T-cell (primary cell): ENCODE measurements at regions of chr6 and their contacts with region 1.

Region 1: DNA sequence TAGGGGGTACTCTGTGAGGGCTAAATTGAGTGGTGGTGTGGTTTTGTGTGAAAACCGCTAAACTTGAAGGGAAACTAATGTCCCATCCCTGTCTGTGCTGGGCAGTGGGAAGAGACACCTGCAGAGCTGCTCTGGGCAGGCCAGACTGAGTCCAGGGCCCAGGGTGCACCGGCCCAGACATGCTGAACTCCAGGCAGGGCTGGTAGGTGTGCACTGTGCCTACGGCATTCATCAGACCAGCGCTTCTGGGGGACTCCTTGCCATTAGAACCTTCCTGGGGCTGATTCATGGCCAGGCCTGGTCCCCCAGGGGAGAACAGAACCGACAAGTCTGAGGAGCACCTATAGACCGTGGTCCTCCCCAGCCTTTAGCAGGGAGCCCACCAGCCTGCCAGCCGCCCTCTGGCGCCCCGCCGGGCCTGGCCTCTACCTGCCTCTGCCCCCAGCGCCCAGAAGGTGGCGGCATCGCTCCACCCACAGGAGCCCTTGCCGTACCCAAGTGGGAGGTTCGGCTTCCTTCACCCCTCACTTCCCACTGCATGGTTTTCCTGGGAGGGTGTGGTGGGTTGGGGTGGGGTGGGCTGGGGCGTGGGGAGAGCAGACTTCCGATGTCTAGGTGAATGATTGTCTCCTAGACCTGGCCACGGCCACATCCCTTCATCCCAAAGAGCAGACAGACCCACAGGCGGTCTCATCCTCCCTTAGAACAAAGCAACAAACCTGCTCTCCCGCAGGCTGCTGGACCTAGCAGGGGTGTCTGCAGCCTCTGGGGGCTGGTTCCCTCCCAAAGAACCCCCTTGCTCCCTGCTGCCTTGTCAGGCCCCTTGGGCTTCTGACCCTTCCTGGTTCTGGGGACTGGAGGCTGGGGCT is 15.5 kb downstream of the CCDC167 start:
- DNase-seq: peak; percentile 50 to 89 (median 73)
- ATAC-seq: peak; percentile 84 to 86 (median 85)
- H3K4me3 ChIP-seq: no peak overlapping the region
- H3K4me3 Mint-ChIP-seq: no peak overlapping the region
- H3K27ac ChIP-seq: peak overlapping the region; percentile 39
- H3K27ac Mint-ChIP-seq: peak overlapping the region in 1 of 2 donors; percentile 16
- H3K4me1 ChIP-seq: peaks cover 0 to 45% of the 10 kb centered on the region in 2 experiments
- H3K4me1 Mint-ChIP-seq: peaks cover 19 to 30% (median 21%) of the 10 kb centered on the region in 3 donors
- H3K27me3 ChIP-seq: no peaks in the 10 kb centered on the region
- H3K27me3 Mint-ChIP-seq: no peaks in the 10 kb centered on the region

Region 2: DNA sequence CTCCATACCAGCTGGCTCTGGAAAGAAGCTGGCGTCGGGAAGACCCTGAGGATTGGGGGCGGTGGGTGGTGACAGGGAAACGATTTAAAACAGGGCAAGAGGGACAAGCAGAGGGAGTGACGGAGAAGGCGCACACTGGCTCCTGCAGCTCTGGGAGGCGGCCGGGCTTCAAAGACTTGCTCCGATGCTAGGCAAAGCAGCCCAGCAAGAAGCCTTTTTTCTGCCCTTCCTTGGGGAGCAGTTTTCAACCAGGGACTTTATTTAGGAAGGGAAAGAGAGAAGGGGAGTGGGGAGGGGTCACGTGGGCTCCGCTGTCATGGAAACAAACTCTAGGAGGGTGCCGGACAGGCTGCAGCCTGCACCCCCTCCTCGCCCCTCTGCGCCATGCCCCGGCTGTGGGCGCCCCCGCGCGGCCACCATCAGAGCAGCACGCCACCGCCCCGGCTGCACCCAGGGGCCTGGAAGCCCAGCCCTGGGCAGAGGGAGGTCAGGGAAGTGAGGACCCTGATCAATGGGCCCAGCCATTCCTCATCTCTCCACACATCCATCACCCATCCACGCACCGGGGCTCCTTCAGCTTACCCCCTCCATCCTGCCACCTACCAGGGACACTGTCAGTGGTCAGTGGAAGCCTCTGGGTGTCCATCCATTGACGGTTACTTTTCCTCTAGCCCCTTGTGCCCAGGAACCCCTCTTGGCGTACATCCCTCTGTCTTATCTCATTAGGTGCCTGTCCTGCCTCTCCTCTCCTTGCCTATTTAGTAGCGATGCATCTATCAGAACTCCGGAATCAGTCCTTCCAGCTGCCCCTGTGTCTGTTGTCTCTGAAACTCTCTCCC is 82.2 kb after region 1 on chr6:
- CTCF ChIA-PET with region 1: interaction called, 8 to 10 read pairs
- POLR2A ChIA-PET with region 1: no interaction called
- DNase-seq: peak; percentile 22 to 82 (median 64)
- ATAC-seq: peak; percentile 89 to 97 (median 94)
- H3K4me3 ChIP-seq: peak overlapping the region; percentile 37 to 67
- H3K4me3 Mint-ChIP-seq: peak overlapping the region in 2 of 3 donors; percentile 34 to 65
- H3K27ac ChIP-seq: no peak overlapping the region
- H3K27ac Mint-ChIP-seq: no peak overlapping the region
- H3K4me1 ChIP-seq: peaks cover 4 to 14% of the 10 kb centered on the region in 2 experiments
- H3K4me1 Mint-ChIP-seq: peaks cover 3 to 18% (median 16%) of the 10 kb centered on the region in 3 donors
- H3K27me3 ChIP-seq: peaks cover 0 to 17% of the 10 kb centered on the region in 2 experiments
- H3K27me3 Mint-ChIP-seq: peaks cover 0 to 6% of the 10 kb centered on the region in 2 donors

Region 3: GRCh38 chr6:37637562-37638413 is 153.6 kb after region 1 on chr6:
- CTCF ChIA-PET with region 1: interaction called in 1 of 2 experiments, 10 read pairs
- POLR2A ChIA-PET with region 1: no interaction called
- DNase-seq: no peak
- ATAC-seq: no peak
- H3K4me3 ChIP-seq: no peak overlapping the region
- H3K4me3 Mint-ChIP-seq: no peak overlapping the region
- H3K27ac ChIP-seq: no peak overlapping the region
- H3K27ac Mint-ChIP-seq: no peak overlapping the region
- H3K4me1 ChIP-seq: peaks cover 0 to 17% of the 10 kb centered on the region in 2 experiments
- H3K4me1 Mint-ChIP-seq: peaks cover 0 to 45% (median 13%) of the 10 kb centered on the region in 3 donors
- H3K27me3 ChIP-seq: peaks cover 0 to 4% of the 10 kb centered on the region in 2 experiments
- H3K27me3 Mint-ChIP-seq: no peaks in the 10 kb centered on the region